ENCODE measurements at regions of chr17 and their contacts with region 1.

Region 1: DNA sequence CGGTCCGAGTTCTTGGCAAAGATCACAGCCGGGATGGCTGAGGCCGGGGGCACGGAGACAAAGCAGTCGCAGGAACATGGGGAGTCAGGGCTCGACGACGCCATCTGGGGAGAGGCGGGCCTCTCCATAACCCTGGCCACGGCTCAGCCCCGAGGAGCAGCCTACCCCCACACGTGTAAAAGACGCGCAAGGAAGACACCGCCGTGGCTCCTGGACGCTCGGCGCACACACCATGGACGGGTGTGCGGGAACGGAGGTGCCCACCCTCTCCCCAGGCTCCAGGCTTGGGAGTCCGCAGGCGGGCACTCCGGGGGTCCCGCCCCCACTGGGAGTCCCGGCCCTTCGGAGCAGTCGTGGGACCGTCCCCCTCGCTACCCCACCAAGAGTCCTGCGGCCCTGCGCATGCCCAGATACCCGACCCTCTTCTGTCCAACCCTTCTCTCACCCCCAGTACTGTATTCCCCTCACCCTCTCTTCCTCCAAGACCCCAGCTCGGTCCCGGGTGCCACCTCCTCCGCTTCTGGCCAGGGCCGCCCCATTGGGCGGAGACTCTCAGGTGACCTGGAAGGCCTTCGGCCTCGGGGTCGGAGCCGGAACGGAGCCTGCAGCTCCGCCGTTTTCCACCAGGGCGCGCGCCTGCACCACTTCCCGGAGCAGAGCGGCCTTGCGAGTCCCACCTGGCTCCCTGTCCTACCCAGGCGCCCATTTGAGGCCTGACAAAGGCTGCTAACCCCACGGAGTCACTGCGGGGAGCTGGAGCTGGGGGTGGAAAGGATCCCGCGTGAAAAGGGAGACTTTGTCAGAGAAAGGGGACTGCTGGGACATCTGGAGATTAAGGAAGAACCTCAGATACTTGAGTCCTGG is at the start of gene SCRN2:
- DNase-seq: peak; percentile 60
- ATAC-seq: peak; percentile 94
- H3K4me3 ChIP-seq: peak within 1 kb of the TSS; percentile 74
- H3K27ac ChIP-seq: peak within 1 kb of the TSS; percentile 17; the same call in 1 of the 2 replicates
- H3K4me1 ChIP-seq: peaks cover 22% of the 10 kb centered on the region
- H3K27me3 ChIP-seq: peaks cover 0 to 1% of the 10 kb centered on the region in 2 experiments; a peak in 2 of 4 replicates
- CTCF ChIP-seq: peak; percentile 93 to 98 (median 97)
- EP300 ChIP-seq: no peak
- POLR2A ChIP-seq: peak; percentile 65; the same call in 1 of the 2 replicates
- RAD21 ChIP-seq: peak; percentile 85
- polyA plus RNA-seq, gene SCRN2: 0.34 to 1.9 TPM

Region 2: DNA sequence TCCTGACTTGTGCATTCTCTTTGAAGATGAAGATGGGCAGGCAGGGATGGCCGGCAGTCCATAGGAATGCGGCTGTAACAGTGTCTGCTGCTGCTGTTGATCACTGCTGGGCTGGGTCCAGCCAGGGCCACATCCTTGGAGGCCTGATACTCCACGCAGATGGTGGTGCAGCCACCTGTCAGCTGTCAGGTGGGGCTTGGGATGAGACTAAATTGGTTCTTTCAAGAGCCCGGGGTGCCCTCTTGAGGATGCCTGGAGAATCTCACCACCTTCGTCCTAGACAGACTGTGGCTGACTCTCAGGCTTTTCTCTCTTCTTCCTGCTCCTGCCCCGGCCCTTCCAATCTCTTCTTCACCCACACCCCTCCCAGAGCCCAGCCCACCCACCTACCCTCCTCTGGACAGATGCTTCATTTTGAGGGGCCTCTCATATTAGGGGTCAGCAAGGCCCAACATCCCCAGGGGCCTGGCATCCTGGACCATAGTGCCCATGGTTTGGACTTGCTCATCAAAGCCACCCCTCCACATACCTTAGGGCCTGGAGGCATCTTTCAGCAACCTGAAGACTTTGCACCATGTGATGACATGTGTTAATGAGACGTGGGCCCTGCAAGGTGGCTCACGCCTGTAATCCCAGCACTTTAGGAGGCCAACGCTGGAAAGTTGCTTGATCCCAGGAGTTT is 38.5 kb before region 1 on chr17:
- CTCF ChIA-PET with region 1: no interaction called
- POLR2A ChIA-PET with region 1: no interaction called
- RAD21 ChIA-PET with region 1: no interaction called
- SMC1A ChIA-PET with region 1: no interaction called
- in situ Hi-C with region 1: no loop called
- intact Hi-C with region 1: no loop called
- DNase-seq: no peak
- ATAC-seq: peak; percentile 98
- H3K4me3 ChIP-seq: no peak overlapping the region
- H3K27ac ChIP-seq: no peak overlapping the region
- H3K4me1 ChIP-seq: no peaks in the 10 kb centered on the region
- H3K27me3 ChIP-seq: no peaks in the 10 kb centered on the region
- CTCF ChIP-seq: peak; percentile 69 to 83 (median 77)
- EP300 ChIP-seq: no peak
- POLR2A ChIP-seq: no peak
- RAD21 ChIP-seq: peak; percentile 74

Region 3: DNA sequence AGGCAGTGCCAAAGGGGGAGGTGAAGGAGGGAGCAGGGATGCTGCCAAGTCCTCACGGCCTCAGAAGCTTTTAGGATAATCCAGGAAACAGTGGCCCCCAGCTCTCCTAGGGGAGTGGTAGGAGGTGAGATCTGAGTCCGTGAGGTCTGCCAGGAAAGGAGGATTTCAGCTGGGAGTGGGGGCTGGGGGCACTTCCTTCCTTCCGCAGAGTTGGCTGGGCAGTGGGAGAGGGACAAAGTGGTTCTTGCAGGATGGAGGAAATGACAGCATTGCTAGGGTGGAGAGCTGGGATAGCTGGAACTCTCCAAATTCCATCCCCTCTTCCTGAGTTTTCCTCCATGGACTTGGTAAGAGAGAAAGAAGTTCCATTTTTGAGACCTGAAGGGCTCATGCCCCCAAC is 14.8 kb after region 1 on chr17:
- CTCF ChIA-PET with region 1: interaction called, 14 read pairs
- POLR2A ChIA-PET with region 1: no interaction called
- RAD21 ChIA-PET with region 1: interaction called, 6 read pairs
- SMC1A ChIA-PET with region 1: interaction called, 6 read pairs
- in situ Hi-C with region 1: no loop called
- intact Hi-C with region 1: no loop called
- DNase-seq: no peak
- ATAC-seq: no peak
- H3K4me3 ChIP-seq: no peak overlapping the region
- H3K27ac ChIP-seq: no peak overlapping the region
- H3K4me1 ChIP-seq: peaks cover 5% of the 10 kb centered on the region
- H3K27me3 ChIP-seq: peaks cover 16 to 41% of the 10 kb centered on the region in 2 experiments
- CTCF ChIP-seq: no peak
- EP300 ChIP-seq: no peak
- POLR2A ChIP-seq: no peak
- RAD21 ChIP-seq: no peak

Region 4: DNA sequence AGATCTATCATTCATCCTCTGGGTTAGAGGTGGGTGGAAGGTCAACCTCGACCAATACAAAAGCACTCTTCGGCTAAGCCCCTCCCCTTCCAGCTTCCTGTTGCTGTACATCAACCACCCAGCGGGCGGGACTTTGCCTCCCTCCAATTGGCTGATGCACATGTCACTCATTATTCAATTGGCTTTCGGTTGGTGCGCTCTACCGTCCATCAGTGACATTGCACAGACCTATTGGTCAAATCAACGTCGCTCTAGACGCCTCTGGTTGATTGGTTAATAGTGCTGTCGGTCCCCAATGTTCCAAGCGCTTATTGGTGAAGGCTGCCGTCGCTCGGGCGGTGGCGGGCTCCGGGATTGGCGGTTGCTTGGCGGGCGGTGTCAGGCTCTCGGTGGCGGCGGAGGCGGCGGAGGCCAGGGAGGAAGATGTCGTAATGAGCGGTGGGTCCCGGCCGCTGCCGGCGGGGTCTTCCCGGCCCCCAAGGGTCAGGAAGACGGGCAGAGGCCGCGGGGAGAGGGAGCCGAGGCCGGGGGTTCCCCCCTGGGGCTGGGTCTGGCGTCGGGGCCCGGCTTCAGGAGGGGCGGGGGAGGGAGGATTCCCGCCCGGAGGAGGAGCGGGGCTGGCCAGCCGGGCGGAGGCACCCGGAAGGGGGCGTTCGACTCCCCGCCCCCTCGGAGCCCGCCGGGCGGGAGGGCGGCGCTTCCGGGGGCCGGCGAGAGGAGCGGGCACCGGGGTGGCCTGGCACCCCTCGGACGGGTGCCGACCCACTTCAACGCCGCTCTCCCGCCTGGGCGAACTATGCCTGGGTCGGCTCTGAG is 55.1 kb after region 1 on chr17 and contains the start of gene SP2:
- CTCF ChIA-PET with region 1: interaction called, 502 read pairs
- POLR2A ChIA-PET with region 1: interaction called, 12 read pairs
- RAD21 ChIA-PET with region 1: interaction called, 206 read pairs
- SMC1A ChIA-PET with region 1: interaction called, 231 read pairs
- in situ Hi-C with region 1: loop called (anchors 5 kb)
- intact Hi-C with region 1: no loop called
- DNase-seq: peak; percentile 100
- ATAC-seq: peak; percentile 94
- H3K4me3 ChIP-seq: peak within 1 kb of the TSS; percentile 95
- H3K27ac ChIP-seq: peak within 1 kb of the TSS; percentile 92
- H3K4me1 ChIP-seq: peaks cover 16% of the 10 kb centered on the region
- H3K27me3 ChIP-seq: no peaks in the 10 kb centered on the region
- CTCF ChIP-seq: no peak; a peak in 2 of 6 replicates
- EP300 ChIP-seq: no peak
- POLR2A ChIP-seq: peak; percentile 80
- RAD21 ChIP-seq: no peak
- polyA plus RNA-seq, gene SP2: 1.2 to 1.9 TPM

Region 5: DNA sequence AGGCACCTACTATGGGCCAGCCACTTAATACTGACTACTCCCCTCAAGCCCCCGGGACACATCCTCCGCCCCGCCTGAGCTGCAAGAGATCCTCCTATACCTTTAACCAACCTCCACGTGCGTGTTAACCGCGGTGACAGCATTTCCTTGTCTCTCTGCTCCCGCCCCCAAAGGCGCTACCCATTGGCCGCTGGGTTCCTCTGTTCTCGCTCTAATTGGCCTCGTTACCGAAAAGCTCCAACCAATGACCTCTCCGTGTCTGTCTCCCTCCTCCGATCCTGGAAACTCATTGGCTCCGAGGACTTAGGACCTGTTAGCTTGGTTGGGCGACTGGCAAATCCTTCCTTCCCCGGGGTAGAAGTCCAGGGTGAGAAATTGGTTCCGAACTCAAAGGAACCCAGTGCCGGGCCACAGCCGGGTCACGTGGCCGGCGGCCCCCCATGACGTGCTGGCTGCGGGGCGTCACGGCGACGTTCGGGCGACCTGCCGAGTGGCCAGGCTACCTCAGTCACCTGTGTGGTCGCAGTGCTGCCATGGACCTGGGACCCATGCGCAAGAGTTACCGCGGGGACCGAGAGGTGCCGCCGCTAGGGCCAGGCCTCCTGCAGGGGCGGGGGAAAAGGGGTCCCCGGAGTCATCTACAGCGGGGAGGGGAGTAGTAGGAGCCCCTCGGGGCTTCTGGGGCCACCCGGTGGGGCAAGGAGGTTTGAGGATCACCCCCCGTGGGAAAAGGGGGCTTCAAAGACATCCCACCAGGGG is 100.4 kb after region 1 on chr17 and contains the start of gene PNPO:
- CTCF ChIA-PET with region 1: interaction called, 17 read pairs
- POLR2A ChIA-PET with region 1: interaction called, 5 read pairs
- RAD21 ChIA-PET with region 1: interaction called, 9 read pairs
- SMC1A ChIA-PET with region 1: interaction called, 47 read pairs
- in situ Hi-C with region 1: no loop called
- intact Hi-C with region 1: loop called (anchors 2 kb)
- DNase-seq: peak; percentile 97
- ATAC-seq: peak; percentile 95
- H3K4me3 ChIP-seq: peak within 1 kb of the TSS; percentile 91
- H3K27ac ChIP-seq: peak within 1 kb of the TSS; percentile 86
- H3K4me1 ChIP-seq: peaks cover 48% of the 10 kb centered on the region
- H3K27me3 ChIP-seq: no peaks in the 10 kb centered on the region
- CTCF ChIP-seq: no peak
- EP300 ChIP-seq: 0 out of 4 replicates have a peak, but pooled peaks of 1 of the 2 experiments have one; percentile 12
- POLR2A ChIP-seq: peak; percentile 79
- RAD21 ChIP-seq: no peak
- polyA plus RNA-seq, gene PNPO: 13.9 to 32.3 TPM

Region 6: GRCh38 chr17:47970704-47971463 is 129.9 kb after region 1 on chr17 and contains the start of gene CDK5RAP3:
- CTCF ChIA-PET with region 1: interaction called, 36 read pairs
- POLR2A ChIA-PET with region 1: interaction called, 5 read pairs
- RAD21 ChIA-PET with region 1: interaction called, 26 read pairs
- SMC1A ChIA-PET with region 1: interaction called, 8 read pairs
- in situ Hi-C with region 1: no loop called
- intact Hi-C with region 1: loop called (anchors 1 kb)
- DNase-seq: peak; percentile 97
- ATAC-seq: peak; percentile 98
- H3K4me3 ChIP-seq: peak within 1 kb of the TSS; percentile 92
- H3K27ac ChIP-seq: peak within 1 kb of the TSS; percentile 83
- H3K4me1 ChIP-seq: peaks cover 15% of the 10 kb centered on the region
- H3K27me3 ChIP-seq: no peaks in the 10 kb centered on the region
- CTCF ChIP-seq: peak; percentile 97 to 100 (median 99); a peak in 5 of 6 replicates
- EP300 ChIP-seq: no peak
- POLR2A ChIP-seq: peak; percentile 97
- RAD21 ChIP-seq: peak; percentile 45
- polyA plus RNA-seq, gene CDK5RAP3: 69.4 to 160 TPM

Region 7: DNA sequence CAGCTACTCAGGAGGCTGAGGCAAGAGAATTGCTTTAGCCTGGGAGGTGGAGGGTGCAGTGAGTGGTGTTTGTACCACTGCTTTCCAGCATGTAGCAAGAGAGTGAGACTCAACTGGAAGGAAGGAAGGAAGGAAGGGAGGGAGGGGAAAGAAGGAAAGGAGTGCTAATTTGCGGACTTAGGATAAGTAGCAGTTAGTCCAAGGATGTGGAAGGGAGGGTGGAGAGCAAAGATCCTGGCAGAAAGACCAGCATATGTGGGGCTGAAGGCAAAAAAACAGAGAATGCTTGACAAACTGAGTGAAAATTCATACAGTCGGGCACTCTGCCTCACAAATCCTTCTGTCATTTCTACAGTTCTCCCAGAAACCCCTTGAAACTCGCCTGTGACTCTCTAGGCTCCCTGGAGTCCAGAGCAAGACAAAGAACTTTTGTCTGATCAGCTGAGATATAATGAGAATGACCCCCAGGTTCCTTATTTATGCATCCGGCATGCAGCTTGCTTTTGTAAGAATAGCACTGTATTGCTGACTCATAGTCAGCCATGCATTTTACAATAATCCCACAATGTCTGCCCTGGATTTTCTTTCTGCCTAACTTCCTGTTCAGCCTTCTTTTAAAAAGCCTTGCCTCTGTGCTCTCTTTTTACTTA is 161.4 kb after region 1 on chr17:
- CTCF ChIA-PET with region 1: interaction called, 13 read pairs
- POLR2A ChIA-PET with region 1: no interaction called
- RAD21 ChIA-PET with region 1: interaction called, 8 read pairs
- SMC1A ChIA-PET with region 1: interaction called, 4 read pairs
- in situ Hi-C with region 1: no loop called
- intact Hi-C with region 1: no loop called
- DNase-seq: peak; percentile 75
- ATAC-seq: peak; percentile 85
- H3K4me3 ChIP-seq: no peak overlapping the region
- H3K27ac ChIP-seq: peak overlapping the region; percentile 85
- H3K4me1 ChIP-seq: peaks cover 49% of the 10 kb centered on the region
- H3K27me3 ChIP-seq: no peaks in the 10 kb centered on the region
- CTCF ChIP-seq: no peak
- EP300 ChIP-seq: peak; percentile 47 to 77; a peak in 2 of 4 replicates
- POLR2A ChIP-seq: no peak
- RAD21 ChIP-seq: no peak

Region 8: DNA sequence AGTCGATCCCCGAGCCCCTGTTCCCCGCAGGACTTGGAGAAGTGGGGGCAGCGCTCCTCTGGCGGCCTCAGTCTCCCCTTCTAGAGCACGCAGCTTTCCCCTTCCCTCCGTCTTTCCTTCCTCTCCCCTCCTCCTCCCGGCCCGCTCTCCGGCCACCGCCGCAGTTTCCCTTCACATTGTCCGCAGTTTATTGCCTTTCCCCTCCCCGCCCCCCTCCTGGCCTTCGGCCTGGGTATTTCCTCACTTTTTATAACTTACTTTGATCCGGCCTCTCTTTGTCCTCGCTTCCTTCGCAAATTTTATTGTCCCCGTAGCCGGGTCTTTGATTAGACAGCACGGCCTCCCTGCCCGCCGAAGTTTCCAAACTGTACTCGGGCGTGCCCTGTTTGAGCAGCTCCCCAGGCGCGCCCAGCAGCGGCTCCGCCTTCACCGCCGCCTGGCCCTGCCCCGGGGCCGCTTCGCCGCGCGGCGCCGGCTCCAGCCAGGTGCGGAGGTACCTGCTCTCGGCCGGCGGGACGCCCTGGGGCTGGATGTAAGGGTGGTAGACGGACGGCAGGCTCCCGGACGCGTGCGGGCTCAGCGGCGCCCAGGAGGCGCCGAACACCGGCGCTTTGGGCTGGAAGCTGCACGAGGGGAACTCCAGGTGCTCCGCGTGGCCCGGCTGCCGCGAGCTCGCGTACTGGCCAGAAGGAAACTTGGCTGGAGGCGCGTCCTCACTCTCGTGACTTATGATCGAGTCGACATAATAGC is 784.7 kb after region 1 on chr17:
- CTCF ChIA-PET with region 1: no interaction called
- POLR2A ChIA-PET with region 1: no interaction called
- RAD21 ChIA-PET with region 1: no interaction called
- SMC1A ChIA-PET with region 1: no interaction called
- in situ Hi-C with region 1: loop called (anchors 10 kb)
- intact Hi-C with region 1: no loop called
- DNase-seq: no peak
- ATAC-seq: peak; percentile 87
- H3K4me3 ChIP-seq: peak overlapping the region; percentile 65
- H3K27ac ChIP-seq: no peak overlapping the region
- H3K4me1 ChIP-seq: no peaks in the 10 kb centered on the region
- H3K27me3 ChIP-seq: peaks cover 36% of the 10 kb centered on the region in 2 experiments
- CTCF ChIP-seq: no peak
- EP300 ChIP-seq: no peak
- POLR2A ChIP-seq: no peak
- RAD21 ChIP-seq: no peak

Measured in GM12878 (cell line).